GM13976 (cell line): ENCODE measurements at regions of chr7 and their contacts with region 1.

Region 1: DNA sequence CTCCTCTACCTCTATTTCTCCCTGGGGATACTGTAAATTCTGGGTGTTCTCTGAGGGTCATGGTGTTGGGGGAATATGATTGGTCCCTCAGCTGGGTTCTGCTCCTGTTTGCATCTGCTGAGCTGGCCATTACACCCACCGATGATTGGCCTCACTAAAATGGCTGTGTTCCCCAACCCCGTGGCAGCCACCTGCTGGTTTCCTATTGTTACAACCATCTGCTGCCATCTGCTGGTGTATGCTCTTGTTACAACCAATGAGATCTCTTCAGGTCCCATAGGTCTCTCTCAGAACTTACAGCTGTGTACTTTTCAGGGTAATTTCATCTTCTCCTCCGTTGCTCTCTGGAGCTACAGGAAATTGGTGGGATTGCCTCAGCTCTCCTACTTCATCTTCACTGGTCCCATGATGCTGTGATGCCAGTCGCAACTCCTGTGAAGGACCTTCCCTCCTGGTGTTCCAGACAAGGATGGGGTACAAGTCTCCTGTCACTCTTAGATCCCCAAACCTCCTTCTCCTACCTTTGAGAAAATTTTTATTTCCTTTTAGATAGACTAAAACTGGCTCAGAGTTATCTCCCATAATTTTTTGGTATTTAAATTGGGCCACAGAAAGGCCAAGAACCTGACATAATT is 303.5 kb upstream of the SMIM30 start:
- DNase-seq: peak; percentile 38
- CTCF ChIP-seq: peak; percentile 85

Region 2: GRCh38 chr7:112550468-112551060 is 871.2 kb before region 1 on chr7:
- in situ Hi-C with region 1: loop called (anchors 25 kb)
- DNase-seq: peak; percentile 66
- CTCF ChIP-seq: peak; percentile 76

Region 3: DNA sequence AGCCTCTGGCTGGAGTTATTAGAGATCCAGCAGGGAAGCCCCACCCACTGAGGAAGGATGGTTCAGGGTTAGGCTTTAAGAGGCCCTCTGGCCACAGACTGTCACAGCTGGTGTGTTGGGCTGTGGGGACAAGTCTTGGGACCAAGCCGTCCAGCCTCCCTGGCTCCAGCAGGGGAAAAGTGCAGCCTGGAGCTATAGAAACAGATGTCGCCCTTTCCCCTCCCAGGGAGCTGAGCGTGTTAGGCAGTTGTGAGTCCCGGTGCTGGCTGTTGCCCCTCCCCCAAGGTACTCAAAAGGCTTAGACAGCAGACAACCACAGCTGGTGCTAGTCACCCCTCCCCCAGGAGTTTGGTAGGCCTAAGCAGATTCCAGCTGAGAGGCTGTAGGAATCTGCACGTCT is 775.0 kb before region 1 on chr7:
- in situ Hi-C with region 1: no loop called
- DNase-seq: no peak
- CTCF ChIP-seq: no peak

Region 4: GRCh38 chr7:113015032-113015645 is 406.7 kb before region 1 on chr7:
- in situ Hi-C with region 1: loop called (anchors 25 kb)
- DNase-seq: no peak
- CTCF ChIP-seq: no peak

Region 5: DNA sequence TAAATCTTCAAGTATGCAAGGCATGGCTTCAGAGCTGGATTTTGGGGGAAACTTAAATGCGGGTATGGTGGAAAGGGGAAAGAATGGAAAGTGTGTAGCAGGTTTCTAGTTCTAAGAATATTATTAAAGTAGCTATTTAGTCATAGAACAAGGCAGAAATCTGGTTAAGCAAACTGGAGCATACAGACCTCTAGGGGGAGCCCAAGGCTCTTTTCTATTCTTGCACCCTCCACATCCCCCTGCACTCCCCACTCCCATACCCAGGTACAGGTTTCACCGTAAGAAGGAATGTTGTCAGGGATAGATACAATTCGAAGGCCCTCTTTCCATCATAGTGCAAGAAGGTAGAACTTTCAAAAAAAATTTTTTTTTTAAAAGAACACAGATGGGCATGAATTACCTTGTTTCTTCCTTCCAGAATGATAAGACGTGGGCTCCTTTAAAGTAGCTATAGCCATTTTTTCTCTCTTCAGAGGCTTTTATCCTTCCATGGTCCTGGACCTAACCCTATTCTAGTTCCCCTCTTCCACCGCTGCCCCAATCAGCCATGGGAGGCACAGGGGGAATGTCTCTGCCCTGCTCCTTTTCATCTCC is 262.0 kb before region 1 on chr7:
- in situ Hi-C with region 1: loop called (anchors 25 kb)
- DNase-seq: no peak
- CTCF ChIP-seq: peak; percentile 43